Activated T-helper 1 cell treated with anti-CD3 and anti-CD28 coated beads, Interleukin-12 subunit alpha, Interleukin-12 subunit beta, Interleukin-2, Interleukin-4 antibody, amounts not matched to agents 30 ng/mL and 10 ng/mL and 1 ng/mL, durations not matched to agents 14 hours and 24 hours and 36 hours (primary cell): ENCODE measurements at regions of chr3 and their contacts with region 1.

Region 1: GRCh38 chr3:186617038-186617946 is 4.4 kb downstream of the AHSG start:
- DNase-seq: peak; percentile 79
- H3K4me3 Mint-ChIP-seq: peak overlapping the region; percentile 68
- H3K27ac Mint-ChIP-seq: peak overlapping the region; percentile 6
- H3K4me1 Mint-ChIP-seq: peaks cover 28% of the 10 kb centered on the region
- H3K27me3 Mint-ChIP-seq: peaks cover 48% of the 10 kb centered on the region

Region 2: GRCh38 chr3:185942907-185943759 is 674.2 kb before region 1 on chr3:
- intact Hi-C with region 1: loop called (anchors 1 kb)
- DNase-seq: peak; percentile 78
- H3K4me3 Mint-ChIP-seq: no peak overlapping the region
- H3K27ac Mint-ChIP-seq: no peak overlapping the region
- H3K4me1 Mint-ChIP-seq: peaks cover 23% of the 10 kb centered on the region
- H3K27me3 Mint-ChIP-seq: peaks cover 17% of the 10 kb centered on the region

Region 3: DNA sequence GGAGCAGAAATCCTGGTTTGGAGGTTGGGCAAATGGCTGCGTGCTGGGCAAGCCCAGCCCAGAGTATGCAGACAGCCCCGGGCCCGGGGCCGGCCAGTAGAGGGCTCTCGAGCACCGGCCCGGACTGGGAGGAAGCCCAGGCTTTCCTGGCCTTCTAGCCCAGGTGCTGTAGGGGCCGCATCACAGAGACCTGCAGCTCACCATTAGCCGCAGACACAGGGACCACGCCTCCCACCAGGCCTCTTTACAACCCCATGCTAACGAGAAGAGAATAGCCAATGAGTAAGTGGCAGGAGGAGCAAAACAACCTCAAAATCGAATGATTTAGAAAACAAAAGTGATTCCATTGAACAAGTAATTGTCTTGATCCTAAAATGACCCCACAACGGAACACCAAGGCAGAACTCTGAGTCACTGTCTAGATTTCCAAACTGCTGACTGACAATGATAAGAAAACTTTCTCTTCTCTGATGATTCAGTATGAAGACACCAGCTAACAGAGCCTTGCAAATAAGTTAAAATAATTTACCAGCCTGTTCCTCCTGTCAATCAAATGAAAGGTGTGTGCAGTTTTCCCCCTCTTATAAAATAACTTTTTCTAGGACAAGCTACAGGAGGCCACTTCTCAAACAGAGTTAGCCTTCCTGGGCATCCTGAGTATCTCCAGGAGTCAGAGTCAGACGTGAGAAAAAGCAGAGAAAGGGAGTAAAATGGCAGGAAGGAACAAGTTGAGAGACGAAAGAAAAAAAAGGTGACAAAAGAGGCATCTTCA is 357.5 kb before region 1 on chr3:
- intact Hi-C with region 1: loop called (anchors 1 kb)
- DNase-seq: peak; percentile 37
- H3K4me3 Mint-ChIP-seq: no peak overlapping the region
- H3K27ac Mint-ChIP-seq: peak overlapping the region; percentile 25
- H3K4me1 Mint-ChIP-seq: peaks cover 21% of the 10 kb centered on the region
- H3K27me3 Mint-ChIP-seq: peaks cover 15% of the 10 kb centered on the region

Region 4: GRCh38 chr3:186330772-186331460 is 286.4 kb before region 1 on chr3:
- intact Hi-C with region 1: no loop called
- DNase-seq: no peak
- H3K4me3 Mint-ChIP-seq: no peak overlapping the region
- H3K27ac Mint-ChIP-seq: no peak overlapping the region
- H3K4me1 Mint-ChIP-seq: no peaks in the 10 kb centered on the region
- H3K27me3 Mint-ChIP-seq: peaks cover 12% of the 10 kb centered on the region

Region 5: DNA sequence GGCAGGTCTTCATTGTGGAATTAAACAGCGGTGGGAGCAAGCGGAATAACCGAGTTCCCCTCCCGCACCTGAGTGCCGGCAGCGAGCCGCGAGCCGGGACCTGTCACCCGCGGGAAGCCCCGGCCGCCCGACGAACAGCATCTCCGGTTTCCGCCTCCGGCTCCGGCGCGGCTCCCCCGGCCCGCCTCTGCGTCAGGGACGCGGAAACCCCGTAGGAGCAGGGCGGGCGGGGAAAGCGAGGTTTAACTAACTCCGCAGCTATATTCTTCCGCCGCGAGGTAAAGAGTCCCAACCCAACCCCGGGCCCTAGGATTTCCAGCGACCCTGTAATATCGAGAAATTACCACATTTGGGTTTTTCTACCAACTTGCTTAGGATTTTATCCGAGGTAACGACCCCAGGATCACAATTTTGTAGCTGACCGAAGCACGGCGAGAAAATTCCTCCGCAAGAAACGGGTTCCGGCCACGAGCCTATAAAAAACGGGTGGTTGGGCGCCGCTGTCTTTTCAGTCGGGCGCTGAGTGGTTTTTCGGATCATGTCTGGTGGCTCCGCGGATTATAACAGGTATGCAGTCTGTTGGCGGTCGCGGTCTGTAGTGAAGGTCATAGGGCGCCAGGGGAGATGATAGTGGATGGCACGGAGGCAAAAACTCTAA is 165.9 kb after region 1 on chr3 and contains the start of gene EIF4A2:
- intact Hi-C with region 1: loop called (anchors 1 kb)
- DNase-seq: peak; percentile 89
- H3K4me3 Mint-ChIP-seq: peak within 1 kb of the TSS; percentile 95
- H3K27ac Mint-ChIP-seq: peak within 1 kb of the TSS; percentile 94
- H3K4me1 Mint-ChIP-seq: peaks cover 41% of the 10 kb centered on the region
- H3K27me3 Mint-ChIP-seq: no peaks in the 10 kb centered on the region
- total RNA-seq, gene EIF4A2: 491 and 514 TPM in 2 replicates

Region 6: DNA sequence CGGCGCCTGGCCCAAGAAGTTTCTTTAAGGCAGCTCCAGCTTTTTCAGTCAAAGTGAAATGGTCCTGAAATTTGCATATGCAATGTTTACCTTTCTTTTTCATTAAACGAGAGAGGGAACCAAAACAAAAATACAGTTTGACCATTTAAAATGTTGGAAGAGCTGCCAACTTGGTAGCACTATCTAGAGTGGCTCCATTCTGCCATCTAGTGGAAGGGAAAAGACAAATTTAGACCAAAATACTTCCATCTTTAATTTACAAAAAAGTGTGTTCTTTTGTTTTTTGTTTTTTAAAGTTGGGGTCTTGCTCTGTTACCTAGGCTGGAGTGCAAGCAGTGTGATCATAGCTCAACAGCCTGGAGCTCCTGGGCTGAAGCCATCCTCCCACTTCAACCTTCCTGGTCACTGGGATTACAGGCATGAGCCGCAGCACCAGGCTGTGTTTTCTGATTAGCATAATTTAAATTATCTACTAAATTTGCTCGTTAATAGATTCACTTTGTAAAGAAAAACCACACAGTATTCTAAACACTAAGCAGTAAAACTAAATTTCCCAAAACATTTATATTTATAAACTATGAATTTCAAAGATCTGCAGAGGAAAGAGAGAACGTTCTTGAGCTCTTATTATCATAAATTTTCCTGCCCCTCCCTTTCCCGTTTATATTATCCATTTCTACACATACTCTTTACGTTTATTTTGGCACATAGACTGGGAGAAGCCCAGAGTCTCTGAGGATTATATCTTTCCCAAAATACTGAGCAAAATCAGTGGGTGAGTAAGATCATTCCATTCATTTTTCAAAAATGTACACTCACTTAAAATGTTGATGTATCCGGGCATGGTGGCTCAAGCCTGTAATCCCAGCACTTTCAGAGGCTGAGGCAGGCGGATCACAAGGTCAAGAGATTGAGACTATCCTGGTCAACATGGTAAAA is 204.4 kb after region 1 on chr3:
- intact Hi-C with region 1: loop called (anchors 1 kb)
- DNase-seq: no peak
- H3K4me3 Mint-ChIP-seq: no peak overlapping the region
- H3K27ac Mint-ChIP-seq: no peak overlapping the region
- H3K4me1 Mint-ChIP-seq: peaks cover 18% of the 10 kb centered on the region
- H3K27me3 Mint-ChIP-seq: peaks cover 8% of the 10 kb centered on the region